Naive thymus-derived CD4-positive, alpha-beta T cell (primary cell): ENCODE measurements at regions of chr2 and their contacts with region 1.

Region 1: GRCh38 chr2:20225294-20226151 is 593 bp upstream of the SDC1 start:
- DNase-seq: peak in 1 of 9 donors; percentile 58
- ATAC-seq: peak; percentile 64
- H3K4me3 ChIP-seq: no peak overlapping the region
- H3K4me3 Mint-ChIP-seq: peak overlapping the region; percentile 30 to 77 (median 59)
- H3K27ac ChIP-seq: no peak overlapping the region
- H3K27ac Mint-ChIP-seq: no peak overlapping the region
- H3K4me1 ChIP-seq: no peaks in the 10 kb centered on the region
- H3K4me1 Mint-ChIP-seq: peaks cover 0 to 5% (median 0%) of the 10 kb centered on the region in 7 donors
- H3K27me3 ChIP-seq: peaks cover 0 to 2% of the 10 kb centered on the region in 2 donors
- H3K27me3 Mint-ChIP-seq: peaks cover 41 to 68% (median 58%) of the 10 kb centered on the region in 5 donors

Region 2: DNA sequence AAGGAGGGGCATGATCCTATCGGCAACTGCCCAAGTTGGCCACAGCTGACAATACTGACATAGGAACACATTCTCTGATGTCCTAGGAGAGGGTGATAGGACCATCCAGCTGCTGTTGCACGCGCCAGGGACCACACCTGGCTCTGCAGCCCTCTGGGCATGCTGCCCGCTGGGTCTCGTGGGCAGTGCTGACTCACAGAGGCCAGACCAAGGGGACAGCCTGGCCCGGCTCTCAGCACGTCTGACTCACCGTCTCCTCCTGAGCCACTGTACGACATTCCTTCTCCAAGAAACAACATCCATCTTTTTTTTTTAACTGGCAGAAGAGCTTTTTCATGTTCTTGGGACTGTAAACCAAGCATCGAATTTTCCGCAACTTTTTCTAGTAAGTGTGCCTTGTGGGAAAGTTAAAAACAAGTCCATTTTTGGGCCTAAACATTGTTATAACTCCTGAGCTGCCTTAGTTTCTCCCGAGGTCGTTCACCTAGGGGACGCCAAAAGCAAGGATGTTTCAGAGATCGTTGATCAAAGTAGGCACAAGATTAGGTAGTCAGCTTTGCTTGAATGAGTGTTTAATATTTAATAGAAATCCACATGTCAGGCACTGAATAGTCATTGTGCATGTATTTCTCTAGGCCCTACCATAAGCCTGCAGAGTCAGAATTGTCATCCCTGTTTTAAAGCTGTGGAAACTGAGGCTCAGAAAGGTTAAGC is 424.0 kb before region 1 on chr2:
- CTCF ChIA-PET with region 1: no interaction called
- POLR2A ChIA-PET with region 1: no interaction called
- intact Hi-C with region 1: no loop called
- DNase-seq: no peak
- ATAC-seq: no peak
- H3K4me3 ChIP-seq: no peak overlapping the region
- H3K4me3 Mint-ChIP-seq: no peak overlapping the region
- H3K27ac ChIP-seq: no peak overlapping the region
- H3K27ac Mint-ChIP-seq: no peak overlapping the region
- H3K4me1 ChIP-seq: no peaks in the 10 kb centered on the region
- H3K4me1 Mint-ChIP-seq: no peaks in the 10 kb centered on the region
- H3K27me3 ChIP-seq: no peaks in the 10 kb centered on the region
- H3K27me3 Mint-ChIP-seq: peaks cover 0 to 11% (median 0%) of the 10 kb centered on the region in 5 donors

Region 3: GRCh38 chr2:20135631-20136050 is 89.9 kb before region 1 on chr2:
- CTCF ChIA-PET with region 1: no interaction called
- POLR2A ChIA-PET with region 1: no interaction called
- intact Hi-C with region 1: loop called in 1 of 2 experiments (anchors 1 kb)
- DNase-seq: peak in 4 of 9 donors; percentile 4 to 7 (median 5)
- ATAC-seq: peak; percentile 30
- H3K4me3 ChIP-seq: no peak overlapping the region
- H3K4me3 Mint-ChIP-seq: no peak overlapping the region
- H3K27ac ChIP-seq: no peak overlapping the region
- H3K27ac Mint-ChIP-seq: no peak overlapping the region
- H3K4me1 ChIP-seq: no peaks in the 10 kb centered on the region
- H3K4me1 Mint-ChIP-seq: peaks cover 0 to 1% (median 0%) of the 10 kb centered on the region in 7 donors
- H3K27me3 ChIP-seq: no peaks in the 10 kb centered on the region
- H3K27me3 Mint-ChIP-seq: peaks cover 2 to 19% (median 16%) of the 10 kb centered on the region in 5 donors